ENCODE measurements at regions of chr2 and their contacts with region 1.

Region 1: DNA sequence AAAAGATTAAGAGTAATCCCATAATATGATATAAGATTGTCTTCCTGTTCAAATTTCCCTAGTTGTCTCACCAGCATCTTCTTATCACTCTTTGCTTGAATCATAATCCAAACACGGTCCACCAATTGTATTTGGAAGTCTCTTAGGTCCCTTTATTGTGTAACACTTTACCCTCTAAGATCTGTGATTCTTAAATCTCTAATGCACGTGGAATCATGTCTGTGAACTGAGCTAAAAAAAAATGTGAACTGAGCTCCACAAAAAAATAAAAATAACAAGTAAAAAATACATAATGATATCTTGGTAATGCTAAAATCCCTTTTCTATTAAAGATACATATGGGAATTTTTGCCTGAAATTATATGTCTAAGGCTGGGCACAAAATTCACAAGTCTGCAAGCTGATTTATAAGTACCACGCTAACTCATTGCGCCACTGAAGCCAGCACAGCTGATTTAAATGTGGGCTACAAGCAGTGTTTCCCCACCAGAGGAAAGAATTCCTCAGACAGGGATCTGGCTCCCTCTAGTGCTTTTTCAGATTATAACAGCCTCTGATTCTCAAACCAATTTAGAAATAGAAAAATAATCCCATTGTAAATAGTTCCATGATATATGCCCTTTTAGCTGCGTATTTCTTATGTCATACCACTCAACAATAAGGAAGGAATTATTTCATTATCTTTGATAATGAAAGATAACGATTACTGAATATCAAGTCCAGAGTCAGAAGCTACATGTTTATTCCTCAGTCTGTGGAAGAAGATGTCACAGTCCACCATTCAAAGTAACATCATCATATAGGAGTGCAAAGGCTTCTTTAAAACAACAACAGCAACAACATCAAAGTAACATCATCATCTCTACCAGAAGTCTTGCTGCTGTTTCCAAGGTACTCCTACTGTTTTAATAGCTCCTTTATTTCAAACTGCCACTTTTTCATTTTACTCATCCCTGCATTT is 22.9 kb downstream of the RBM43 start:
- DNase-seq: peak; percentile 66
- H3K27ac ChIP-seq: no peak overlapping the region
- CTCF ChIP-seq: peak; percentile 90

Region 2: DNA sequence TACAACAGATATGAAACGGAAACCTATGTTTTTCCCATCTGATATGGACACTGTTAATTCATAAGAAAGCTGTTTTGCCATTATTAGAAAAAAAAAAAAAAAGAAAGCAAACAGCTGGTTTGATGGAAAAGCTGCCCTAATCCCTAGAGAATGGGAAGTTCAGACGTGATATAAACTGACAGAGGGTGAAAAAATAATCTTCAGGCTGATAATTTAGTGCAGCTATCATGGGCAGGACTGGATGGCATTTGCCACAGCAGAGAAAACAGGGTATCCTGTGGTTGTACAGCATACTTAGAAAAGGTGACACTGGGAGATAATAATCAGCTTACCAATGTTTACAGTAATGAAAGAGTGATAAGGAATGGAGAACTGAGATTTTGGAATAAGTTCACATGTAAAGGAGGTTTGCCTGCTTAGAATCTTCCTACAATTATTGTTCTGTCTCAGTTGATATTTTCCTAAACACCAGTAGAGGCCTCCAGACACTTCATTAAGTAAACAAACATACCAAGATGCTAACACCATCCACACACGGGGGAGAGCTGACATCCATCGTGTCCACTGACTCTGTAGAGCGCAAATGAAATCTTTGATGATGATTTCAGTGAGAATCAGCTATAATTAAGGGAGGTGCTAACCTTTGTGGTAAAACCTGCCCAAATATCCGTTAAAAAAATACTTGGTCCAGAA is 1439.6 kb before region 1 on chr2:
- CTCF ChIA-PET with region 1: interaction called, 10 read pairs
- POLR2A ChIA-PET with region 1: no interaction called
- DNase-seq: peak; percentile 19
- H3K27ac ChIP-seq: no peak overlapping the region
- CTCF ChIP-seq: peak; percentile 49

Region 3: GRCh38 chr2:150391779-150392178 is 847.0 kb before region 1 on chr2:
- CTCF ChIA-PET with region 1: no interaction called
- POLR2A ChIA-PET with region 1: no interaction called
- DNase-seq: no peak
- H3K27ac ChIP-seq: no peak overlapping the region
- CTCF ChIP-seq: no peak